Left ventricle myocardium inferior (tissue), 1 donor: ENCODE measurements at regions of chr9 and their contacts with region 1.

Region 1: DNA sequence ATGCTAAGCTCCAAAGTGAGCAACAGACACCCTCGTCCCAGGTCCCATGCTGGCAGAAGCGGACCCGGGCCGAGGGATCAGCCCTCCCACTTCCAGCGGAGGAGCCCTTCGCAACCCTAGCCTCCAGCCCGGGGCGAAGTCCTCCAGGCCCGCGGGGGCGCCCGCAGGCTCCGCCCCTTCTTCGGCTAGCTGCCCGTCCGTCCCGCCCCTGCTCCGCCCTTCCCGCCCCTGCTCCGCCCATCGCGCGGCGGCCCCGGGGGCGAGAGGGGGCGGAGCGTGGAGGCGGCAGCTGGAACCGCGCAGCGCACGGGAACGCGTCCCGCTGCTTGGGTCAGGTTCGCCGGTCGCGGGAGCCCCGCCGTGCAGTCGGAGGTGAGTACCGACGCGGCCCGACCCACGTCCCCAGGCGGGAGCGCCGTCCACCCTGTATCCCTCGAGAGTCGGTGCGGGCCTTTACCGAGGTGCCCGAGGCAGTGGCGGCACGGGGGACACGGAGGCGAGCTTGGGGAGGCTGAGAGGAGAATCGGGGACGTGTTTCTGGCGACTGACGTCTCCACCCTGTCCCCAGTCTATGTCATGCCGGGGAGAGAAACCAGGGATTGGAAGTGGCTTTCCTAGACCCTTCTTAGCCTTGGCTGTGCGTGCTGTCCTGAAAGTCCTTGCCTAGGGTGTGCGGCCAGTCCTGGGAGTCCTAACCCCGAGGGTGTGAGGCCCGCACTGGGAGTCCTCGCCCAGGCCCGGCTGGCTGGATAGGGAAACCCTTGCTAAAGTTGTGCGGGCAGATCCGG is at the start of gene ACO1:
- DNase-seq: peak; percentile 92
- H3K4me3 ChIP-seq: peak within 1 kb of the TSS; percentile 87
- H3K27ac ChIP-seq: peak within 1 kb of the TSS; percentile 90
- H3K4me1 ChIP-seq: peaks cover 49% of the 10 kb centered on the region
- H3K27me3 ChIP-seq: no peaks in the 10 kb centered on the region
- CTCF ChIP-seq: no peak
- total RNA-seq, gene ACO1: 62.7 TPM

Region 2: DNA sequence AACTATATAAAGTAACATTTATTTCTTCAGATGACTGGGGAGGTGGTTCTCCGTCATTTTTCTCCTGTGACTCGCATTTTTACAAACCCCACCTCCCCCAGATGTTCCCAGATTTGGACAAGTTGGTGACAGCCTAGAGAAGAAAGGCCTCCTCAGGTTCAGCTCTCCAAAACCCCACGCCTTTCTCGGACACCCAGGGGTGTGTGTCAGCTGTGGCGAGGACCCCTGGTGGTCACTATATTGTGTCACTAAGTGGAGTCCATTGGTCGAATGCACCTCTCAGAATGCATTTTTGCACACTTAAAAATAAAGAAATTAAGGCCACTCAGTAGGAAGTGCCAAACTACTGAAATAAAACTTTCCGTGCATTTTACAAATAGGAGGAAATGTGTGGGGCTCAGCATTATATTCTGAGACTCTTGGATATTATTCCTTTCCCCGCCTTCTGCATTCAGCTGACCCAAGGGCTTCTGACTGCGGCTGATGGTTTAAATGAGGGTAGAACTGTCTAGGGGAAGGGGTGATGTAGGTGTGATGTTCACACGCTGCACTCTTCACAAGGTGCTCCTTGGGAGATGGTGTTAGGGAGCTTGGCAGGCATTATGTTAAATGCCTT is 47.5 kb after region 1 on chr9:
- intact Hi-C with region 1: loop called (anchors 10 kb)
- DNase-seq: peak; percentile 30
- H3K4me3 ChIP-seq: no peak overlapping the region
- H3K27ac ChIP-seq: no peak overlapping the region
- H3K4me1 ChIP-seq: peaks cover 3% of the 10 kb centered on the region
- H3K27me3 ChIP-seq: no peaks in the 10 kb centered on the region
- CTCF ChIP-seq: peak; percentile 69